CD14-positive monocyte (primary cell): ENCODE measurements at regions of chr1 and their contacts with region 1.

Region 1: GRCh38 chr1:224329842-224330753 is at the start of gene NVL:
- DNase-seq: peak; percentile 66 to 75 (median 71)
- H3K4me3 ChIP-seq: peak within 1 kb of the TSS; percentile 57 to 89 (median 72)
- H3K4me3 Mint-ChIP-seq: peak within 1 kb of the TSS; percentile 94 to 96
- H3K27ac ChIP-seq: peak within 1 kb of the TSS; percentile 73 to 90
- H3K27ac Mint-ChIP-seq: peak within 1 kb of the TSS; percentile 97 to 100 (median 99)
- H3K4me1 ChIP-seq: peaks cover 16 to 24% of the 10 kb centered on the region in 2 donors
- H3K4me1 Mint-ChIP-seq: peaks cover 39% of the 10 kb centered on the region
- H3K27me3 ChIP-seq: no peaks in the 10 kb centered on the region
- H3K27me3 Mint-ChIP-seq: peaks cover 0 to 2% (median 2%) of the 10 kb centered on the region in 3 donors
- CTCF ChIP-seq: no peak
- polyA plus RNA-seq, gene NVL: 8.4 to 12.6 (median 9.6) TPM

Region 2: DNA sequence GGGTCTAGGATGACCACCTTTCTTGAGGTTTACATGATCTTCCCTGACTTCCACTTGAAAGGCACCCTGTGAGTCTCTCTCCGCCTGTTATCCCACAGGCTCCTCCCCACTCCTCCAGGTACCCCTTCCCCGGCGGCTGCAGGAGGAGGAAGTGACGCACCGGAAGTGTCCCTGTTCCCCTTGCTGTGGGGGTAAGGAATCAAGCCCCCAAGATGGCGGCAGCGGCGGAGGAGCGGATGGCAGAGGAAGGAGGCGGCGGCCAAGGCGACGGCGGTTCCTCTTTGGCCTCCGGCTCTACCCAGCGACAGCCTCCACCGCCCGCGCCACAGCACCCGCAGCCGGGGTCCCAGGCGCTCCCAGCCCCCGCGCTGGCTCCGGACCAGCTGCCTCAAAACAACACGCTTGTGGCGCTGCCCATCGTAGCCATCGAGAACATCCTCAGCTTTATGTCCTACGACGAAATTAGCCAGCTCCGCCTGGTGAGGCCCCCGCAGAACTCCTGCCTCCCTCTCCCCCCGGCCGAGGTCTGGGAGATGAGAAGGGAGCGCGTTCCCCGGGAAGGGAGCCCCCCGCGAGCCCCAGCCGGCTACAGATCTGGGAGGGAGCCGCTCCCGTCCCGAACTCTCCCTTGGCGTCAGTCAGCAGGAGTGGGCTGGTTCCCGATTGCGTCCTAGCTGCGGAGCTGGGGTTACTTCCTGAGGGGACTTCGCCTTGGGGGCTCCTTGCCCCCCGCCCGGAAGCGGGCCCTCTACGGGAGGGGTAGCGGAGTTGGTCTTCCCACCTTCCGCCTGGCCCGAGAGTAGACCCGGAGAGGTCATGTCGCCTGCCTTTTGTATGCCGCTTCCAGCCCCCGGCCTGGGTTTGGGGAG is 215.9 kb before region 1 on chr1 and contains the start of gene FBXO28:
- intact Hi-C with region 1: loop called (anchors 5 kb)
- DNase-seq: peak; percentile 92 to 94 (median 94)
- H3K4me3 ChIP-seq: peak within 1 kb of the TSS; percentile 75 to 87 (median 76)
- H3K4me3 Mint-ChIP-seq: peak within 1 kb of the TSS; percentile 86 to 94
- H3K27ac ChIP-seq: peak within 1 kb of the TSS; percentile 91 to 96
- H3K27ac Mint-ChIP-seq: peak within 1 kb of the TSS; percentile 89 to 95 (median 93)
- H3K4me1 ChIP-seq: peaks cover 22 to 34% of the 10 kb centered on the region in 2 donors
- H3K4me1 Mint-ChIP-seq: peaks cover 24% of the 10 kb centered on the region
- H3K27me3 ChIP-seq: peaks cover 0 to 2% of the 10 kb centered on the region in 2 donors
- H3K27me3 Mint-ChIP-seq: peaks cover 0 to 5% (median 0%) of the 10 kb centered on the region in 3 donors
- CTCF ChIP-seq: no peak
- polyA plus RNA-seq, gene FBXO28: 12.9 to 15.8 (median 13.0) TPM

Region 3: GRCh38 chr1:224411766-224412165 is 81.7 kb after region 1 on chr1:
- intact Hi-C with region 1: no loop called
- DNase-seq: no peak
- H3K4me3 ChIP-seq: no peak overlapping the region
- H3K4me3 Mint-ChIP-seq: no peak overlapping the region
- H3K27ac ChIP-seq: peak overlapping the region in 1 of 2 donors; percentile 24
- H3K27ac Mint-ChIP-seq: peak overlapping the region in 2 of 7 donors; percentile 4 to 50
- H3K4me1 ChIP-seq: no peaks in the 10 kb centered on the region
- H3K4me1 Mint-ChIP-seq: no peaks in the 10 kb centered on the region
- H3K27me3 ChIP-seq: no peaks in the 10 kb centered on the region
- H3K27me3 Mint-ChIP-seq: no peaks in the 10 kb centered on the region
- CTCF ChIP-seq: no peak